Sciatic nerve (tissue), 2 donors: ENCODE measurements at regions of chr22 and their contacts with region 1.

Region 1: DNA sequence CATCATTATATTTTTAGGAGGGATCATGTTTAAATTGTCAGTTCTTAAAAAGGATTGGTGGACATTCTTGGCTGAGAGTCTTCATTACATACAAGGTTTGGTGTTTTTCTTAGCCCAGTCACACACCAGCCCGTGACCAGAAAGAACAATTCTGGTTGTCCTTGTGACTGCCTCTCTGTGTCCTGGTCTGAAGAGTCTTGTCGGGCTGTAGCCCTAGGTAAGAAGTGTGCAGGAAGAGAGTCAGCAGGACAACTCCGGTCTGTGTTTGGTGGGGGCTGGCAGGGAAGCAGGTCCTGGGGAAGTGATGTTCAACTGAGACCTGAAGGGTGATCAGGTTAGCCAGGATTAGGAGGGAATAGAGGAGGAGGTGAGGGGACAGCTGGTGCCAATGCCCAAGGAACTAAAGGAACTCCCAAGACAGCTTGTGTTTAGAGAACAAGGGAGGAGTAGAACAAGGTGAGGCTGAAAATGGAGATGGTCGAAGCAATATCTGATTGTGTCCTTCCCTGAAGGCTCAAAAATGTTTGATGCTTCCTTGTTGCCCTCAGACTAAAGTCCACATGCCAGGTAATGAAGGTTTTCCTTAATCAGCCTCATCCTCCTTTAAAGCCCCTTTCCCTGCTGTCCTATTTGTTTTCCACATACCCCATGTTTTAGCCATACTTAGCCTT is 65.3 kb upstream of the ADORA2A start:
- DNase-seq: no peak
- ATAC-seq: no peak

Region 2: GRCh38 chr22:24402460-24403192 is 40.5 kb after region 1 on chr22:
- intact Hi-C with region 1: loop called (anchors 1 kb)
- DNase-seq: no peak
- ATAC-seq: peak; percentile 68